Activated T-helper 1 cell treated with anti-CD3 and anti-CD28 coated beads, Interleukin-12 subunit alpha, Interleukin-12 subunit beta, Interleukin-2, Interleukin-4 antibody, amounts not matched to agents 30 ng/mL and 10 ng/mL and 1 ng/mL, durations not matched to agents 14 hours and 24 hours and 36 hours (primary cell): ENCODE measurements at regions of chr4 and their contacts with region 1.

Region 1: DNA sequence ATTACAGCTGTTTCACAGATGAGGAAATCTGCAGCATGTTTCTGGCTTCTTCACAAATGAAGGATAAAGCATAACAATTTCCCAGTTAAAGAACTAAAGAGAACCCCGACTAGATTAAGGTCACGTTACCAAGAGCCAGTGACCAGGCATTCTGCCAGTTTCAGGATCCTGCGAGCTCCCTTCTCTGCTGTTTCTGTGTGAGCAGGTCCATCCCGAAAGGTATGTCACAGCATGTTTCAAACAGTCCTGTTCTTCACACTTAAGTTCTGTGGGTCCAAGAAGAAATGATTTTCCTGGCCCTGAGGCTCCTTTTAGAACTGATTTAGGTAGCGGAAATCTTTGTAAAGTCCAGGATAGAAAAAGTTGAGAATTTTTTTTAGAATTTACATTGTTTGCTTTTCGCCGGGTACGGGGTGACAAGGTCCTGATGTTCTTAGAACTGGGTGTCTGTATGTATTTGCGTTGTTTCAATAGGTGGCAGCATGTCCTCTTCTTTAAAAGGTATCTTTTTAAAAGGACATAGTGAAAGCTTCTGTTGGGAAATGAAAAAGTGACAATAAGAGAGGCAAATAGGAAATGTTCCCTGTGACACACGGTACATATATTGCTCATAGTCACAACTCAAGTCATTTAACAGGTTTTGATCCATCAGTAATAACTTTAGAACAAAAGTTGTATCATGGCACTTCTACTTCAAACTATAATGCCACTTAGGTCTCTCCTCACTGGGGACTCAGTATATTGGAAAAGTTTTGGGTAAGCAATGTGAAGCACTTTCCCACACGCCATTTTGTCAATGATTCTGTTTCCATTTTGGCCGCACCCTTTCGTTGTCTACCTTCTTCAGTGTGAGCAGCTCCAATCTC is 18.4 kb downstream of the IL21 start:
- DNase-seq: no peak
- H3K4me3 Mint-ChIP-seq: peak overlapping the region; percentile 54
- H3K27ac Mint-ChIP-seq: peak overlapping the region; percentile 55
- H3K4me1 Mint-ChIP-seq: peaks cover 43% of the 10 kb centered on the region
- H3K27me3 Mint-ChIP-seq: no peaks in the 10 kb centered on the region

Region 2: DNA sequence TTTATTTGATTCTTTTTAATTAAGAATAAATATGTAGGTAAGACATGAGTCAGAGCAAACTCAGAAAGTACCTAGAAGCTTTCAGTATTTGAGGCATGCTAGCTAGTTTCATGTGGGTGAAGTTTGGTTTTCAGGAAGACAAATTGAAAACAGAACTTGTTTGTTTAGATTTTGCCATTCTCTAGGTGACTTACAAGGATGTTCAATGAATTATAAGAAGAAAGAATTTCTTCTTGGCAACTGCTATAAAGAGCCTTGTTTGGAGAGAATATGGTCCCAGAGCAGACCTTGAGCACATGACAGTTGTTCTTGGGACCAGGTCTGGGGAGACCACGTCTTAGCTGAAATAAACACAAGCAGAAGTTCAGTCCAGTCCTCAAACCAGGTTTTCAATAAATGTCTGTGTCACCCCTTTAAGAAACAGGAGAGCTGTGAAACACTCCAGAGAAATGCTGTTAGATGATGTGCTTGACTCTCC is 56.3 kb after region 1 on chr4:
- intact Hi-C with region 1: loop called (anchors 2 kb)
- DNase-seq: no peak
- H3K4me3 Mint-ChIP-seq: peak overlapping the region; percentile 66
- H3K27ac Mint-ChIP-seq: peak overlapping the region; percentile 94
- H3K4me1 Mint-ChIP-seq: peaks cover 59% of the 10 kb centered on the region
- H3K27me3 Mint-ChIP-seq: no peaks in the 10 kb centered on the region

Region 3: GRCh38 chr4:122716825-122717448 is 114.4 kb after region 1 on chr4:
- intact Hi-C with region 1: loop called (anchors 1 kb)
- DNase-seq: peak; percentile 55
- H3K4me3 Mint-ChIP-seq: peak overlapping the region; percentile 25
- H3K27ac Mint-ChIP-seq: peak overlapping the region; percentile 81
- H3K4me1 Mint-ChIP-seq: peaks cover 46% of the 10 kb centered on the region
- H3K27me3 Mint-ChIP-seq: peaks cover 2% of the 10 kb centered on the region

Region 4: DNA sequence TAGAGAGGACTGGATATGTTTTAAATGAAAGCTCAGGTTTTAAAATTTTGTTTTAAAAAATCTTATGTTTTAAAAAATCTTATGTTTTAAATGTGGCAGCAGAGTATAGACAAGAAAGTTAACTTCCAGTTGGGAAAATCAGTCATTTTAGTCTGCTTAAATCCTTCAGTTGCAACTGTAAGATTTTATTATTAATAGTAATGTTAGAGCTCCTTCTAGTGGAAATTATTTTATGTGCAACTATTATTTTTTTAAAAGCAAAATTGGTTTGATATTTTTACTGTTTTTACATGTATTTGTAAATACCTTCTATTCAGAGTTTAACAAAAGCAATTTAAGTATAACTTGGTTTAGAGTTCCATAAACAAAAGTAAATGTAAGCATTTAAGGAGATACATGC is 328.4 kb after region 1 on chr4:
- intact Hi-C with region 1: loop called (anchors 1 kb)
- DNase-seq: no peak
- H3K4me3 Mint-ChIP-seq: no peak overlapping the region
- H3K27ac Mint-ChIP-seq: no peak overlapping the region
- H3K4me1 Mint-ChIP-seq: peaks cover 31% of the 10 kb centered on the region
- H3K27me3 Mint-ChIP-seq: no peaks in the 10 kb centered on the region